Astrocyte of the cerebellum (primary cell): ENCODE measurements at regions of chr12 and their contacts with region 1.

Region 1: GRCh38 chr12:116533343-116534251 is 25.6 kb upstream of the MAP1LC3B2 start:
- DNase-seq: no peak
- H3K4me3 ChIP-seq: peak overlapping the region; percentile 47
- CTCF ChIP-seq: no peak

Region 2: GRCh38 chr12:116492703-116493324 is 40.8 kb before region 1 on chr12:
- in situ Hi-C with region 1: no loop called
- DNase-seq: peak; percentile 5
- H3K4me3 ChIP-seq: no peak overlapping the region
- CTCF ChIP-seq: no peak

Region 3: GRCh38 chr12:116582610-116583009 is 49.0 kb after region 1 on chr12:
- in situ Hi-C with region 1: loop called (anchors 10 kb)
- DNase-seq: no peak
- H3K4me3 ChIP-seq: no peak overlapping the region
- CTCF ChIP-seq: no peak